ENCODE measurements at regions of chr3 and their contacts with region 1.

Region 1: DNA sequence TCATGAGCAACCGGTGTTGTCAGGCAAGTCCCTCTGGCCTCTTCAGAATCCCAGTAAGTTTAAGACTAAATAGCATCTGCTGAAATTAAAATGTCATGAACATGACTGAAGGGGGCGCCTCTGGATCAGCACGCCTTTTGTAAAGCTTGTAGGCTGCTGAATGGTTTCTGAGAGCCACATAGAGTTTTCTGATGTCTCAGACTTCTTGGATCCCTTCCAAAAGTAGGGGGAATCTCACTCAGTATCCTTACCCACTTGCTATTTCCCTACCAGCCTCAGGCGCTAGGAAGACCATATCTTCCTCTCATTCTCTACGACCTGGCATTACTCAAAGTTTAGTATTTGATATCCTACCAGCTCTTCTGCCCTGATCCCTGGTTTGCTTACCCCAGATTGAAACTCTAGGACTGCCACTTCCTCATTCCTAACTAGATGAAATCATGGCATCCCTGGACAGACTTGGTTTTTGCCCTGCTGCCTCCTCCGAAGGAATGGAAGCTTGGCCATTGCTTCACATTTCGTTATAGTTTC is 62.7 kb upstream of the CD47 start:
- DNase-seq: peak; percentile 50
- H3K4me3 ChIP-seq: no peak overlapping the region
- H3K27ac ChIP-seq: no peak overlapping the region
- H3K4me1 ChIP-seq: no peaks in the 10 kb centered on the region
- CTCF ChIP-seq: peak; percentile 76

Region 2: GRCh38 chr3:108062051-108062450 is 91.5 kb before region 1 on chr3:
- CTCF ChIA-PET with region 1: no interaction called
- POLR2A ChIA-PET with region 1: no interaction called
- intact Hi-C with region 1: no loop called
- DNase-seq: peak; percentile 30
- H3K4me3 ChIP-seq: no peak overlapping the region
- H3K27ac ChIP-seq: no peak overlapping the region
- H3K4me1 ChIP-seq: peaks cover 9% of the 10 kb centered on the region
- CTCF ChIP-seq: no peak

Region 3: DNA sequence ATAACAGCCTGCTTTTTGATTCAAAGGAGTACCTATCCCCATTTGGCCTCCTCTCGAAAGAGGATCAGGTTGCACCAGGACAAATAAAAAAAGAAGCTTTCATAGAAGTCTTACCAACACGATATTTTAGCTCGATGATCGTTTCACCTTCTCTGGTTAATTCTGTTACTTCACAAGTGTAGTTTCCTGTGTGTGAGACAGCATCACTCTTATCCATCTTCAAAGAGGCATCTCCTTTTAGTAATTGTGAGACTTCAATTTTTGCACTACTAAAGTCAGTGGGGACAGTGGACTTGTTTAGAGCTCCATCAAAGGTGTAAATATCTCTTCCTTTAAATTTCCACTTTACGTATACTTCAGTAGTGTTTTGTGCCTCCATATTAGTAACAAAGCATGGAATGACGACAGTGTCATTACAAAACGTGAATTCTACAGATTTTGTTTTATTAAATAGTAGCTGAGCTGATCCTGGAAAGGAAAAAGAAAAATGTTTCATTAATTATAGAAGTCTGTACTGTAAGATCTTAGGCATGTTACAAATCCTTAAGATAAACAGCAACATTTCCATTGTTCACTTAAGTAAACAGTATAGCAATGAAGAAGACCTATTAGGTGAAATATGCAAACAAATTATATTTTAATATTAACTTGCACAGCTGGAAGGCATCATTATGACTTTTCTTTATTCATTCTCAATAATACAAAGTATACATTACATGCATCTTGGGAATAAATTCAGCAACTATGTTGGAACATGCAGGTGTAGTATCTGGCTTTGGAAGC is 73.4 kb before region 1 on chr3:
- CTCF ChIA-PET with region 1: no interaction called
- POLR2A ChIA-PET with region 1: no interaction called
- intact Hi-C with region 1: no loop called
- DNase-seq: no peak
- H3K4me3 ChIP-seq: no peak overlapping the region
- H3K27ac ChIP-seq: no peak overlapping the region
- H3K4me1 ChIP-seq: peaks cover 4% of the 10 kb centered on the region
- CTCF ChIP-seq: no peak

Region 4: DNA sequence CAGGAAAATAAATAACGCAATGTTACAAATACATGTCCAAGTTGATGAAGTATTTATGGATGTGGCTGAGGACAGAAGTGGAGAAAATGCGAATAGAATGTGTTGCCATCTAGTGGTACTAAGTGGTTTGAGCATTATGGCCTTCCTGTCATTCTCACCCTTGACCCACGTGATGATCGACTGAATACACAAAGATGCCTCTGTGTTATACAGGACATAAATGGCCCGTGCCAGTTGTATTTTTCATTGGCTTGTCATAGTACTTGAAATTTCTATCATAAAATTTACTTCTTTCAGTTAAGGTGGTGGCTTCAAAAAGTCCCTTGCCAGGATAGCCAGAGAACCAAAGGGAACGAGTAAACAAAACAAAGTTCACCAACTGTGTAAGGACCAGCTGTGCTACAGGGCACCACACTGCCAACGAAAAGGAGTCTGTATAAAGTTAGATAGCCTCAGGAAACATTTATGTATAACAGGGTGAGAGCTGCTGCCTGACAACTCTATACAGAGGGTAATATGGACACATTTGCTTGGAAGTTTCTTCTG is 253.2 kb after region 1 on chr3:
- CTCF ChIA-PET with region 1: no interaction called
- POLR2A ChIA-PET with region 1: interaction called, 3 read pairs
- intact Hi-C with region 1: loop called (anchors 2 kb)
- DNase-seq: peak; percentile 60
- H3K4me3 ChIP-seq: no peak overlapping the region
- H3K27ac ChIP-seq: no peak overlapping the region
- H3K4me1 ChIP-seq: no peaks in the 10 kb centered on the region
- CTCF ChIP-seq: peak; percentile 74